MCF 10A (cell line): ENCODE measurements at regions of chr21 and their contacts with region 1.

Region 1: DNA sequence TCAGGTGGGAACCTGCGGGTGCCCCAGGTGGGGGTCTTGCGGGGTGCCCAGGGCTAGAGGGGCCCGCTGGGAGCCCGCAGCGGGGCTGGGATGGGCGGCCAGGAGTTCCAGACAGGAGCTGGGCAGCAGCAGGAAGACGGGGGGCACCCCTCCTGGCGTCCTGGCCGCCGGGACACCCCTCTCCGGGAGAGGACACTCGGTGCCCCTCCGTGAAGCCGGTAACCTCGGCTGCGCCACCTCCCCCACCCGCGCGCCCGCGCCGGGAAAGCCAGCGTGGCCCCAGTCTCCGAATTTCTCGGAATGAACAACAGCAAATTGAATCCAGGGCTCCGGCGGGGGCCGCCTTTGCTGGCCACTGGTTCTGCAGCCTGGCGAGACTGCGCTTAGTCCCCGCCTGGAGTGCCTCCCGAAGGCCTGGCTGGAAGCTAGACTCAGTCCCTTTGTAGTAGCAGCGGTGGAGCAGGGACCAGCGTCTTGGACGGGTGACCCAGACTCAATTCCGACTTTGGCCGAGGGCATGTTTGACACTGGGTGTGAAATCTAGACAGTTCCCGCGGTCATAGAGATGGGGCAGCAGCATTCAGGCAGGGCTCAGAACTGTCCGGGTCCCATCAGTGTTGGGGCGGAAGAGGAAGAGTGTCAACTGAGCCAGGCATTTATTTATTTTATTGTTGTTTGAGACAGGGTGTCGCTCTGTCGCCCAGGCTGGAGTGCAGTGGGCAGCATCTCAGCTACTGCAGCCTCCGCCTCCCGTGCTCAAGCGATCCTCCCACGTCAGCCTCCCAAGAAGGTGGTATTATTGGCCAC is 769 bp downstream of the IFNGR2 start:
- DNase-seq: peak; percentile 45
- H3K4me3 Mint-ChIP-seq: peak overlapping the region; percentile 92
- H3K27ac Mint-ChIP-seq: peak overlapping the region; percentile 96
- H3K4me1 Mint-ChIP-seq: peaks cover 26% of the 10 kb centered on the region
- H3K27me3 Mint-ChIP-seq: no peaks in the 10 kb centered on the region
- CTCF ChIP-seq: no peak

Region 2: DNA sequence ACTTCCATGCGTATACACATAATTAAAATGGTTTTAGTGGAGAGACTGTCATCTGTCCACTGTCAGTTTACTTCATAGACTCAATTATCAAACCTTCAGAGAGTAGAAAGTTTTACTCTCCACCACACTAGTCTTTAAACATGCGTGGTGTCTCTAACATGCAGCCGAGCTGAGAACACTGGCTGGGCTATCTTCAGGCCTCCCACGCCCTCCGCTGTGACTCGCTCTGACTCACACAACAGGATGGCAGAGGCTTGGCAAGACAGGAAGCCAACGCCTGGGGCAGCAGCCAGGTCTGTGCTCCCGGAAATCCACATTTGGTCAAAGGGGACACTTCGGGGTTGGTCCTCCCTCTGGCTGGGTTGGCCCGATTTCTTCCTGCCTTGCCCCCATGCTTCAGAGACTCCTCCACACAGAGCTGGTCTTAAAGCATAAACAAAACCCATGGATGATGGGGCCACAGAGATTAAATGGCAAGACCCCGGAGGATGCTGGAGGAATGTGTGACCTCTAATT is 23.4 kb before region 1 on chr21:
- CTCF ChIA-PET with region 1: interaction called, 5 read pairs
- POLR2A ChIA-PET with region 1: interaction called, 71 read pairs
- intact Hi-C with region 1: loop called (anchors 1 kb)
- DNase-seq: peak; percentile 99
- H3K4me3 Mint-ChIP-seq: peak overlapping the region; percentile 38
- H3K27ac Mint-ChIP-seq: peak overlapping the region; percentile 88
- H3K4me1 Mint-ChIP-seq: peaks cover 42% of the 10 kb centered on the region
- H3K27me3 Mint-ChIP-seq: no peaks in the 10 kb centered on the region
- CTCF ChIP-seq: no peak

Region 3: GRCh38 chr21:33386222-33386784 is 17.7 kb before region 1 on chr21:
- CTCF ChIA-PET with region 1: interaction called, 5 read pairs
- POLR2A ChIA-PET with region 1: interaction called, 71 read pairs
- intact Hi-C with region 1: loop called (anchors 1 kb)
- DNase-seq: no peak
- H3K4me3 Mint-ChIP-seq: no peak overlapping the region
- H3K27ac Mint-ChIP-seq: no peak overlapping the region
- H3K4me1 Mint-ChIP-seq: peaks cover 20% of the 10 kb centered on the region
- H3K27me3 Mint-ChIP-seq: no peaks in the 10 kb centered on the region
- CTCF ChIP-seq: no peak

Region 4: GRCh38 chr21:33428669-33429068 is 24.7 kb after region 1 on chr21:
- CTCF ChIA-PET with region 1: interaction called, 10 read pairs
- POLR2A ChIA-PET with region 1: interaction called, 236 read pairs
- intact Hi-C with region 1: no loop called
- DNase-seq: peak; percentile 99
- H3K4me3 Mint-ChIP-seq: peak overlapping the region; percentile 60
- H3K27ac Mint-ChIP-seq: peak overlapping the region; percentile 93
- H3K4me1 Mint-ChIP-seq: peaks cover 17% of the 10 kb centered on the region
- H3K27me3 Mint-ChIP-seq: no peaks in the 10 kb centered on the region
- CTCF ChIP-seq: no peak

Region 5: DNA sequence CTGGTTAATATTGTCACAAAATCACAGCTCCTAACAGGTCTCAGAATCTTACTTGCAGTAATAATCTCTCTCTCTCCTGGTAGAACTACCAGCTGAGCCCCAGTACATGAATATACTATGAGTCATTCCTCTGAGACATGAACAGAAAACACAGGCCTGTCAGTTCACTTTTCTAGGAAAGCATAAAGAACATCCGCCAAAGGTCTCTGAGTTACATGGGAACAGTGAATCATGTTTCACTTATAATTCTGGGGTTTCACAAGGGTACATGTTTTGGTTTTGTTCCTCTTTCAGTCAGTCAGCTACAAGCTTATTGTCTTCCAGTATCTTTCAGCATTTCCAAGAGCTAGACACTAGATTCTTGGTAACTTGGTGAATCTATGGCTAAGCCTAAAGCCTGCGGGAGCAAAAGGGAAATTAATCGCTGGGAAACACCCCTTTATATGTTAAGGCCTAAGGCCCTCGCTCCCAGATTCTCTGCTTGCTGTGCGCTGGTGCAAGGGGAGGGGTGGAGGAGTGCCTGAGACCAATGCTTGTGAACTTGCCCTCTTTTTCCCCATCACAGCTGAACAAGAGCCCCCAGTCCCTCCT is 30.9 kb after region 1 on chr21:
- CTCF ChIA-PET with region 1: interaction called, 10 read pairs
- POLR2A ChIA-PET with region 1: interaction called, 236 read pairs
- intact Hi-C with region 1: no loop called
- DNase-seq: peak; percentile 94
- H3K4me3 Mint-ChIP-seq: peak overlapping the region; percentile 61
- H3K27ac Mint-ChIP-seq: peak overlapping the region; percentile 95
- H3K4me1 Mint-ChIP-seq: peaks cover 21% of the 10 kb centered on the region
- H3K27me3 Mint-ChIP-seq: no peaks in the 10 kb centered on the region
- CTCF ChIP-seq: no peak

Region 6: GRCh38 chr21:33479679-33480480 is 75.9 kb after region 1 on chr21 and contains the start of gene TMEM50B:
- CTCF ChIA-PET with region 1: no interaction called
- POLR2A ChIA-PET with region 1: interaction called, 22 read pairs
- intact Hi-C with region 1: no loop called
- DNase-seq: peak; percentile 95
- H3K4me3 Mint-ChIP-seq: peak within 1 kb of the TSS; percentile 87
- H3K27ac Mint-ChIP-seq: peak within 1 kb of the TSS; percentile 74
- H3K4me1 Mint-ChIP-seq: peaks cover 5% of the 10 kb centered on the region
- H3K27me3 Mint-ChIP-seq: no peaks in the 10 kb centered on the region
- CTCF ChIP-seq: peak; percentile 30
- total RNA-seq, gene TMEM50B: 20.7 and 27.8 TPM in 2 replicates